Sigmoid colon (tissue), 7 donors: ENCODE measurements at regions of chr18 and their contacts with region 1.

Region 1: DNA sequence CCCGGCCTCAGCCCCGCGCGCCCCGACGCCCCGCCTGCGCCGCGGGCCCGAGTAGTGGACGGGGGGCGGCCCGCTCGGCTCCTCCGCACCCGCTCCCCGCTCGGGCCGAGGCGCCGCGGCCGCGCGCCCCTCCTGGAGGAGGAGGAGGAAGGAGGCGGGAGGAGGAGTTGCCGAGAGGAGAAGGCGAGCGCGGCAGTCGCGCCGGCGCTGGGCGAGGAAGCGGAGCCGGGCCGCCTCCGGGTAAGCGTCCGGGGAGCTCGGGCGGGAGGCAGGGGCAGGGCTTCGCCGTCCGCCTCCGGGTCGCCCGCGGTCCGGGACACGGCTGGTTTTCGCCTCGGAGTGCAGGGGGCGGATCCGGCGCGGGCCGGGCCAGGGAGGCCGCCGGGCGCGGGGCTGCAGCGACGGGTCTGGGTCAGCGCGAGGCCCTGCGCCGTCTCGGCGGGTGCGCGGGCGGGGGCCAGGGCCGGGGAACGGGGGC is at the start of gene SOCS6:
- DNase-seq: peak; percentile 74
- H3K4me3 ChIP-seq: peak within 1 kb of the TSS; percentile 71 to 86 (median 84)
- H3K27ac ChIP-seq: peak within 1 kb of the TSS; percentile 87 to 94 (median 92)
- H3K4me1 ChIP-seq: peaks cover 0 to 45% (median 39%) of the 10 kb centered on the region in 4 donors
- H3K27me3 ChIP-seq: no peaks in the 10 kb centered on the region
- CTCF ChIP-seq: no peak
- EP300 ChIP-seq: no peak
- POLR2A ChIP-seq: no peak
- total RNA-seq, gene SOCS6: 16.6 to 23.9 (median 20.3) TPM

Region 2: GRCh38 chr18:70205421-70206397 is 83.2 kb before region 1 on chr18 and contains the start of gene RTTN:
- intact Hi-C with region 1: loop called (anchors 1 kb)
- DNase-seq: peak; percentile 95
- H3K4me3 ChIP-seq: peak within 1 kb of the TSS; percentile 67 to 81 (median 80)
- H3K27ac ChIP-seq: peak within 1 kb of the TSS; percentile 91 to 96 (median 94)
- H3K4me1 ChIP-seq: peaks cover 0 to 18% (median 5%) of the 10 kb centered on the region in 4 donors
- H3K27me3 ChIP-seq: no peaks in the 10 kb centered on the region
- CTCF ChIP-seq: no peak
- EP300 ChIP-seq: no peak
- POLR2A ChIP-seq: no peak
- total RNA-seq, gene RTTN: 11.3 to 18.2 (median 15.2) TPM

Region 3: GRCh38 chr18:70337139-70337972 is 48.5 kb after region 1 on chr18:
- intact Hi-C with region 1: loop called (anchors 5 kb)
- DNase-seq: no peak
- H3K4me3 ChIP-seq: no peak overlapping the region
- H3K27ac ChIP-seq: peak overlapping the region in 3 of 4 donors; percentile 58 to 73 (median 68)
- H3K4me1 ChIP-seq: peaks cover 0 to 26% (median 23%) of the 10 kb centered on the region in 4 donors
- H3K27me3 ChIP-seq: no peaks in the 10 kb centered on the region
- CTCF ChIP-seq: no peak
- EP300 ChIP-seq: peak in 2 of 4 donors; percentile 48 to 54
- POLR2A ChIP-seq: no peak

Region 4: GRCh38 chr18:70431203-70431624 is 142.3 kb after region 1 on chr18:
- intact Hi-C with region 1: loop called (anchors 5 kb)
- DNase-seq: no peak
- H3K4me3 ChIP-seq: no peak overlapping the region
- H3K27ac ChIP-seq: no peak overlapping the region
- H3K4me1 ChIP-seq: peaks cover 0 to 5% (median 0%) of the 10 kb centered on the region in 4 donors
- H3K27me3 ChIP-seq: no peaks in the 10 kb centered on the region
- CTCF ChIP-seq: no peak
- EP300 ChIP-seq: no peak
- POLR2A ChIP-seq: no peak